CD4-positive, alpha-beta memory T cell (primary cell): ENCODE measurements at regions of chr6 and their contacts with region 1.

Region 1: DNA sequence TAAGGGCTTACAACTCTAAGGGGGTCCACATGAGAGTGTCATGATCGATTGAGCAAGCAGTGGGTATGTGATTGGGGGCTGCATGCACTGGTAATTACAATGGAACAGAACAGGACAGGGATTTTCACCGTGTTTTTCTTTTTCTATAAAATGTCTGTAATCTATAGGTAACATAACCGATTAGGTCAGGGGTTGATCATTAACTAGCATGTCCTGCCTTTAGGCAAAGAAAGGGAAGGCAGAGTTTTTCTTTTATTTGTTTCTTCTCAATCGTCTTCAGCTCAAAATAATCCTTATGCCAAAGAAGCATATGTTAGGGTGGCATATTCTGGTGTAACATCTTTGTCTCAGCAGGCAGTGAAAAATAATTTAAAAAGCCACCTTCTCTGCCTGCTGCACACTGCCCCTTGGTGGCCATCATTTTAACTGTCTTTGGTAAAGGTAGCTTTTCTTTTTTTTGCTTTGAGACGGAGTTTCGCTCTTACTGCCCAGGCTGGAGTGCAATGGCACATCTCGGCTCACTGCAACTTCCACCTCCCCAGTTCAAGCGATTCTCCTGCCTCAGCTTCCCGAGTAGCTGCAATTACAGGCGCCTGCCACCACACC is 9.7 kb upstream of the CEP43 start:
- DNase-seq: peak; percentile 47 to 74 (median 56)
- H3K4me3 ChIP-seq: no peak overlapping the region
- H3K4me3 Mint-ChIP-seq: peak overlapping the region in 1 of 8 donors; percentile 12
- H3K27ac ChIP-seq: no peak overlapping the region
- H3K27ac Mint-ChIP-seq: peak overlapping the region in 2 of 7 donors; percentile 67 to 78
- H3K4me1 ChIP-seq: peaks cover 11% of the 10 kb centered on the region
- H3K4me1 Mint-ChIP-seq: peaks cover 20 to 33% (median 24%) of the 10 kb centered on the region in 4 donors
- H3K27me3 ChIP-seq: no peaks in the 10 kb centered on the region
- H3K27me3 Mint-ChIP-seq: no peaks in the 10 kb centered on the region

Region 2: DNA sequence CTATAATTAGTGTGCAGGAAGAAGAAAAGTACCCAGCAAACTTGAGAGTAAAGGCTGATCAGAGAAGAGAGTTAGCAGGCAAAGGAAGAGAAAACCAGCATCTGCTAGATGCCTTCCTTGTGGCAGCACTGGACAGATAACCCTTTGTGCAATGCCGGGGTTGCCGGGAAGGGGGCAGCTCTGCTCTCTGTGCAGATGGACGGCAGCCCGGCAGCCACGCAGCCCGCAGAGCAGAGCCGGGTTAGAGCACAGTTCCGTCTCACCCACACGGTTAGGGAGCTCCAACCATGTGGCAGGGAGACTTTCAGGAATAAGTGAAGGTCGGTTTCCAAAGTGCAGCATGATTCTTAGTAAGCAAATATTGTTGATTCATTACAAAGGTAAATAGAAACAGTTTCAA is 282.5 kb before region 1 on chr6:
- CTCF ChIA-PET with region 1: no interaction called
- POLR2A ChIA-PET with region 1: no interaction called
- intact Hi-C with region 1: no loop called
- DNase-seq: no peak
- H3K4me3 ChIP-seq: no peak overlapping the region
- H3K4me3 Mint-ChIP-seq: no peak overlapping the region
- H3K27ac ChIP-seq: no peak overlapping the region
- H3K27ac Mint-ChIP-seq: peak overlapping the region in 1 of 7 donors; percentile 10
- H3K4me1 ChIP-seq: no peaks in the 10 kb centered on the region
- H3K4me1 Mint-ChIP-seq: peaks cover 0 to 1% (median 0%) of the 10 kb centered on the region in 4 donors
- H3K27me3 ChIP-seq: no peaks in the 10 kb centered on the region
- H3K27me3 Mint-ChIP-seq: peaks cover 3 to 5% of the 10 kb centered on the region in 2 donors

Region 3: DNA sequence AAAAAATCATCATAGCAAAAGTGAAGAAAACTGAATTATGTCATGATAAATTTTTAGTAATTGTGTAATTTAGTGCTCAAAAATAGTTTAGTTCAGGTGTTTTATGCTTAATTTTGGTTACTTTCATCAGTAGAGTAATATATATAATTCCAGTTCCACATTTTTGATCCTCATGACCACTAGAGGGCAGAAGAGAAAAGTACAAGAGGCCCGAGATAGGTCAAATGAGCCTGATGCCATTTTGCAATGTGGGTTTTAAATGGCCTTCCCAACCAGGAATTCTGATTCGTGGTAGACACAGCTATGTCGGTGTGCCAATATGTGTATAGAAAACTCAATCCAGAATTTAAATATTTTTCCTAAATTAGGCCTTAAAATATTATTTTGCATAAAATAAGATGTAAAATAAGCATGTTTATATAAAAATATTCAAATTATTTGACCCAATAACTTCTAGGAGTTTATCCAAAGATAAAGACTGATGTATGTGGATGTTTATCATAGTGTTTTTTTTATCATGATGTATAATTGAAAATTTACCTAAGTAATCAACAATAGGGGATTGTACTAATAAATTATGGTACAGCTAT is 202.7 kb before region 1 on chr6:
- CTCF ChIA-PET with region 1: interaction called, 142 read pairs
- POLR2A ChIA-PET with region 1: interaction called, 4 read pairs
- intact Hi-C with region 1: loop called (anchors 1 kb)
- DNase-seq: peak in 4 of 5 donors; percentile 60 to 66 (median 62)
- H3K4me3 ChIP-seq: no peak overlapping the region
- H3K4me3 Mint-ChIP-seq: no peak overlapping the region
- H3K27ac ChIP-seq: no peak overlapping the region
- H3K27ac Mint-ChIP-seq: no peak overlapping the region
- H3K4me1 ChIP-seq: no peaks in the 10 kb centered on the region
- H3K4me1 Mint-ChIP-seq: no peaks in the 10 kb centered on the region
- H3K27me3 ChIP-seq: no peaks in the 10 kb centered on the region
- H3K27me3 Mint-ChIP-seq: no peaks in the 10 kb centered on the region

Region 4: GRCh38 chr6:166862287-166862977 is 127.1 kb before region 1 on chr6:
- CTCF ChIA-PET with region 1: interaction called, 10 read pairs
- POLR2A ChIA-PET with region 1: interaction called, 3 read pairs
- intact Hi-C with region 1: loop called (anchors 5 kb)
- DNase-seq: peak; percentile 31 to 58 (median 46)
- H3K4me3 ChIP-seq: peak overlapping the region; percentile 5 to 53
- H3K4me3 Mint-ChIP-seq: peak overlapping the region; percentile 82 to 94 (median 88)
- H3K27ac ChIP-seq: no peak overlapping the region
- H3K27ac Mint-ChIP-seq: peak overlapping the region in 4 of 7 donors; percentile 59 to 69 (median 64)
- H3K4me1 ChIP-seq: peaks cover 14% of the 10 kb centered on the region
- H3K4me1 Mint-ChIP-seq: peaks cover 6 to 12% (median 7%) of the 10 kb centered on the region in 4 donors
- H3K27me3 ChIP-seq: no peaks in the 10 kb centered on the region
- H3K27me3 Mint-ChIP-seq: peaks cover 0 to 4% of the 10 kb centered on the region in 2 donors

Region 5: DNA sequence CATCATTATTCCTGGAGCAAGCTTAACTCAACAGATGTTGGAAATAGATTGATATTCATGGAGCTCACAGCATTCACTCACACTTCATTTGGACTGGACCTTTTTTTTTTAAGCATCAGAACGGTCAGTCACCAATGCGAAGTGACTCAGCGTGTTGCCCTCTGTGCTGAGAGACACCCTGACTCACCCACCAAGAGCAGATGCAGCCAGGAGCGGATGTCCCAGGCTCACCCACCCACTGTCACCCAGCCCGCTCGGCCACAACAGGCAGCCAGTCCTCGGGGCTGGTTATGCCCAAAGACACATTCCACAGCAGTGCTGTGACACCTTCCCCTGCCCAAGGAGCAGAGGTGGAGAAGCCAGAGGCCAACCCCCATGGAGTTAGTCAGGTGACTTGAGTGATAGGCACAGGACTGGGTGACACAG is 48.9 kb before region 1 on chr6:
- CTCF ChIA-PET with region 1: interaction called, 68 read pairs
- POLR2A ChIA-PET with region 1: interaction called, 26 read pairs
- intact Hi-C with region 1: no loop called
- DNase-seq: no peak
- H3K4me3 ChIP-seq: no peak overlapping the region
- H3K4me3 Mint-ChIP-seq: no peak overlapping the region
- H3K27ac ChIP-seq: no peak overlapping the region
- H3K27ac Mint-ChIP-seq: peak overlapping the region in 4 of 7 donors; percentile 32 to 81 (median 39)
- H3K4me1 ChIP-seq: peaks cover 40% of the 10 kb centered on the region
- H3K4me1 Mint-ChIP-seq: peaks cover 30 to 55% (median 38%) of the 10 kb centered on the region in 4 donors
- H3K27me3 ChIP-seq: no peaks in the 10 kb centered on the region
- H3K27me3 Mint-ChIP-seq: no peaks in the 10 kb centered on the region

Region 6: DNA sequence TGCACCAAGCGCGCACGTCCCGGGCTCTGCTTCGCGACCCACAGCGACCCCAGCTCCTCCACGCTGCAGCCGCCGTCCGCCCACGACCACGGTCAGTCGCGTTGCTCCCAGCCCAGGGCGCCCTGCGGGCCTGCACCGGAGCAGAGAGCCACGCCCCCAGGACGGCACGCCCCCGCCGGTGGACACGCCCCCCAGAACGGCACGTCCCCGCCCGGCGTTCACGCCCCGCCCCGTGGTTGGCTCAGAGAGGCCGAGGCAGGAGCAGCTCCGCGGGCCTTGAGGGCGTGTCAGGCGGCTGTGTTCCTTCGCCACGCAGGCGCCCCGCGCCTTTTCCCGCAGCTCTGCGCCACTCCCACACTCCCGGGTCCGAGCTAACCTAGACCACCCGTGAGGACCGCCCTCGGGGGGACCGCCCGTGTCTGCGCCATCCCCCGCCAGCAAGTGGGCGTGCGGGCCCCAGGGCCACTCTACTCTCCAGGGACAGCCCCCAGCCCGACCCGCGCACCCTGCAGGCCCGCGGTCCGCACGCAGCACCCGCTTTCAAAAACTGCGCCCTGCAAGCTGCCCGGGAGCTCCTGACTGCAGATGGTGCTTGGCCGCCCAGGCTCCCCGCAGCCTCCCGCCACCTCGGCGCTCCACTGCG is 33.0 kb before region 1 on chr6 and contains the start of gene RNASET2:
- CTCF ChIA-PET with region 1: interaction called, 244 read pairs
- POLR2A ChIA-PET with region 1: interaction called, 66 read pairs
- intact Hi-C with region 1: loop called (anchors 1 kb)
- DNase-seq: peak; percentile 96 to 100 (median 97)
- H3K4me3 ChIP-seq: peak within 1 kb of the TSS; percentile 68 to 95
- H3K4me3 Mint-ChIP-seq: peak within 1 kb of the TSS; percentile 91 to 100 (median 97)
- H3K27ac ChIP-seq: peak within 1 kb of the TSS; percentile 92
- H3K27ac Mint-ChIP-seq: peak within 1 kb of the TSS; percentile 94 to 100 (median 98)
- H3K4me1 ChIP-seq: peaks cover 67% of the 10 kb centered on the region
- H3K4me1 Mint-ChIP-seq: peaks cover 57 to 79% (median 67%) of the 10 kb centered on the region in 4 donors
- H3K27me3 ChIP-seq: no peaks in the 10 kb centered on the region
- H3K27me3 Mint-ChIP-seq: no peaks in the 10 kb centered on the region
- total RNA-seq, gene RNASET2: 296 to 306 TPM

Region 7: GRCh38 chr6:167119670-167120381 is 130.3 kb after region 1 on chr6:
- CTCF ChIA-PET with region 1: interaction called, 12 read pairs
- POLR2A ChIA-PET with region 1: interaction called, 4 read pairs
- intact Hi-C with region 1: no loop called
- DNase-seq: peak; percentile 85 to 91 (median 87)
- H3K4me3 ChIP-seq: peak overlapping the region in 1 of 2 donors; percentile 40
- H3K4me3 Mint-ChIP-seq: peak overlapping the region; percentile 65 to 85 (median 73)
- H3K27ac ChIP-seq: peak overlapping the region; percentile 63
- H3K27ac Mint-ChIP-seq: peak overlapping the region; percentile 94 to 98 (median 95)
- H3K4me1 ChIP-seq: peaks cover 85% of the 10 kb centered on the region
- H3K4me1 Mint-ChIP-seq: peaks cover 68 to 95% (median 79%) of the 10 kb centered on the region in 4 donors
- H3K27me3 ChIP-seq: no peaks in the 10 kb centered on the region
- H3K27me3 Mint-ChIP-seq: peaks cover 0 to 1% of the 10 kb centered on the region in 2 donors

Region 8: DNA sequence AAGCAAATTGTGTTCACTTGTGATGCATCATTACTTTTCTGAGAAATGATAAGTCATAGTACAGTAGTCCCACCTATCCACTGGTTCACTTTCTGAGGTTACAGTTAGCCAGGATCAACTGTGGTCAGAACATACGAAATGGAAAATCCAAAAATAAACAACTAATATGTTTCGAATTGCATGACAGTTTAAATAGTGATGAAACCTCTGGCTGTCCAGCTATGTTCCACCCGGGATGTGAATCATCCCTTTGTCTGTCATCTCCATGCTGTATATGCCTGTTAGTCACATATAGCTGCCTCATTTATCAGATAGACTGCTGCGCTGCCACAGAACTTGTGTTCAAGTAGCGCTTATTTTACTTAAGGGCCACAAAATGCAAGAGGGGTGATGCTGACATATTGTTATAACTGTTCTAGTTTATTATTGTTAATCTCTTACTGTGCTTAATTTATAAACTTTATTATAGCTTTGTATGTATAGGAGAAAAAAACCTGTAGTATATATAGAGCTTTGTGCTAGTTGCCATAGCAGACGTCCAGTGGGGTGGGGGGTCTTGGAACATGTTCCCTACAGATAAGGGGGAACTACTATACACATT is 866.4 kb after region 1 on chr6:
- CTCF ChIA-PET with region 1: no interaction called
- POLR2A ChIA-PET with region 1: no interaction called
- intact Hi-C with region 1: no loop called
- DNase-seq: no peak
- H3K4me3 ChIP-seq: no peak overlapping the region
- H3K4me3 Mint-ChIP-seq: no peak overlapping the region
- H3K27ac ChIP-seq: no peak overlapping the region
- H3K27ac Mint-ChIP-seq: no peak overlapping the region
- H3K4me1 ChIP-seq: no peaks in the 10 kb centered on the region
- H3K4me1 Mint-ChIP-seq: peaks cover 8 to 19% (median 9%) of the 10 kb centered on the region in 4 donors
- H3K27me3 ChIP-seq: no peaks in the 10 kb centered on the region
- H3K27me3 Mint-ChIP-seq: peaks cover 0 to 2% of the 10 kb centered on the region in 2 donors